ENCODE measurements at regions of chr1 and their contacts with region 1.

Region 1: GRCh38 chr1:91165033-91165654 is 143.3 kb upstream of the ZNF644 start:
- DNase-seq: peak; percentile 78
- H3K4me3 ChIP-seq: no peak overlapping the region
- H3K27ac ChIP-seq: no peak overlapping the region
- H3K4me1 ChIP-seq: no peaks in the 10 kb centered on the region
- H3K27me3 ChIP-seq: no peaks in the 10 kb centered on the region
- CTCF ChIP-seq: peak; percentile 60 to 87 (median 78)
- EP300 ChIP-seq: no peak
- POLR2A ChIP-seq: no peak

Region 2: GRCh38 chr1:90434460-90434859 is 730.7 kb before region 1 on chr1:
- intact Hi-C with region 1: no loop called
- DNase-seq: no peak
- H3K4me3 ChIP-seq: no peak overlapping the region
- H3K27ac ChIP-seq: no peak overlapping the region
- H3K4me1 ChIP-seq: no peaks in the 10 kb centered on the region
- H3K27me3 ChIP-seq: no peaks in the 10 kb centered on the region
- CTCF ChIP-seq: no peak
- EP300 ChIP-seq: no peak
- POLR2A ChIP-seq: no peak

Region 3: GRCh38 chr1:90579212-90579802 is 585.8 kb before region 1 on chr1:
- intact Hi-C with region 1: loop called (anchors 2 kb)
- DNase-seq: no peak
- H3K4me3 ChIP-seq: no peak overlapping the region
- H3K27ac ChIP-seq: no peak overlapping the region
- H3K4me1 ChIP-seq: no peaks in the 10 kb centered on the region
- H3K27me3 ChIP-seq: no peaks in the 10 kb centered on the region
- CTCF ChIP-seq: peak in 3 of 4 experiments; percentile 27 to 60 (median 27)
- EP300 ChIP-seq: no peak
- POLR2A ChIP-seq: no peak

Region 4: DNA sequence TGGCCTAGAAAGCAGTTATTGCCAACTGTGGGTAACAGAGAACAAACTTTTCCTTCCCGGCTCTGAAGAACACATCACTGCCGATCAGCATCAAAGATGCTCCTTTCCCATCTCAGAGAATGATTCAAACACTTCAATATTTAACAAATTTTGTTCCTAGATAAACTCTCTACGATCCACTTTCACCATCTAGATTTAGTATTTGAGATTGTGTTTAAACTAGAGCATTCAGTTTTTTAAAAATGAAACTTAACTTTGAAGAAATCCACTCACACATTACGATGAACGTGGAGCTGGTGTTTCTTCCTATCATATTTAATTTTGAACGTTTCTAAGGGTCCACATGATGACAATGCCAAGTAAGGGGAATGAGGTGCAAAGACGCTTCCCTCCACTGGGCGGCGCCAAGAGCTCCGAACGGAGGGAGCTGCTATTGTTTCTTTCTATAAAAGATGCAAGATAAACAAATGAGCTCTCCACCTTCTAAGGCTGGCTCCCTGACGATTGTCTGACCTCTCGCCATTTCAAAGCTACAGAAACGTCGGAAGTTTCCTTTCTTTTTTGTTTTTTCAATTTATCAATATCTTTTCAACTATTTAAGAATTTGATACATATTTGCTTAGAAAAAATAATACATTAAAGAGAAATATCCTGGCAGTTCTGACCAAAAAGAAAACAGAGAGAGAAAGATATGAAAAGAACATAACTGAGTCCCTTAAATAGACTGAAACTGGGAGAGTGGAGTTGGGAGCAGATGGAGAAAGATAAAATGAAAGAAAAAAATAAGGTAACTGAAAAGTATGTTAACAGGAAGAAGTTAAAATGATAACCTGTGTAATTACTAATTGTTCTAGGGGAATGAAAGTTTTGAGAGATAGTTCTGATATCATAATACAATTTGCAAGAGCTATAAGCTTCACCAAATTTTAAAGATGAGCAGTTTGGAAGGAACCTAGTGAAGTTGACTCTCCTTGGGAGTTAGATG is 443.6 kb before region 1 on chr1:
- intact Hi-C with region 1: loop called (anchors 10 kb)
- DNase-seq: no peak
- H3K4me3 ChIP-seq: no peak overlapping the region
- H3K27ac ChIP-seq: no peak overlapping the region
- H3K4me1 ChIP-seq: peaks cover 0 to 65% (median 57%) of the 10 kb centered on the region in 4 donors
- H3K27me3 ChIP-seq: peaks cover 82 to 100% (median 99%) of the 10 kb centered on the region in 3 donors
- CTCF ChIP-seq: peak in 3 of 4 experiments; percentile 25 to 52 (median 26)
- EP300 ChIP-seq: no peak
- POLR2A ChIP-seq: no peak

Region 5: DNA sequence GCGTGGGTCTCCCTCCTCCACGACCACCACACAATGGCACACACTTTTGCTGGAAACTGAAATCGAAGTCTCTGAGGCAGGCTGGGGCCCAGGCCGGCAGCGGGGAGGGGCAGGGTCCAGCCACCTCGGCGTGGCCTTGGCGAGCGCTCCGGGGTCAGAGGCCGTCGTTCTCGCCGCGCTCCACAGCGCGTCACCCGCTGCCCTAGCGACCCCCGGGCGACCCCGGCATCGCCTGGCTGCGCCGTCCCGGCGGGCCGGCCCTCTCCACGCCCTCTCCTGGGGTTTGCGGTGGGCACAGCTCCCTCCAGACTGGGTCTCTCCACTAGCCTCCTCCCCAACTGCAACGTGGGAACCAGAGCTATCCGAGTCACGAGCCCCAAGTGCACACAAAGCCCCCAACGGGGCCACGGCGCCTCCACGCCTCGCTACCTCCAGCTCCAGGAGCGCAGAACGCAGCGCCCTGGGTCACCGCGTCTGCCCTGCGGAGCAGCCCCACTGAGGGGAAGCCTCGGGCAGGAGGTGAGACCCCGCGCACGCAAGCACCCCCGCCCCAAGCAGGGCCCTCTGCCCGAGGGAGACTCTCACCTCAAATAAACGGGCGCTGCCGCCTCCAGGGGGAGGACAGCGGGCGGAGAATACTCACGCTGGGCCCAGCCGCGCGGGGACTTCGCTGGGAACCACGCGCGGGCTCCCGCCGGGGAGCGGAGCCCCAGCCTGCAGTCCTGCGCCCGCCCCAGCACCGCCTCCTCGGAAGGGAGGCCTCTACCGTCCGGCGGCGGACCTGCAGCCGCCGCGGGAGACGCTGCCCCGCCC is 314.0 kb before region 1 on chr1:
- intact Hi-C with region 1: loop called (anchors 10 kb)
- DNase-seq: peak; percentile 88
- H3K4me3 ChIP-seq: peak overlapping the region; percentile 61 to 75 (median 62)
- H3K27ac ChIP-seq: peak overlapping the region; percentile 43 to 62 (median 50)
- H3K4me1 ChIP-seq: peaks cover 0 to 18% (median 10%) of the 10 kb centered on the region in 4 donors
- H3K27me3 ChIP-seq: no peaks in the 10 kb centered on the region
- CTCF ChIP-seq: peak; percentile 7 to 91 (median 26)
- EP300 ChIP-seq: no peak
- POLR2A ChIP-seq: no peak

Region 6: DNA sequence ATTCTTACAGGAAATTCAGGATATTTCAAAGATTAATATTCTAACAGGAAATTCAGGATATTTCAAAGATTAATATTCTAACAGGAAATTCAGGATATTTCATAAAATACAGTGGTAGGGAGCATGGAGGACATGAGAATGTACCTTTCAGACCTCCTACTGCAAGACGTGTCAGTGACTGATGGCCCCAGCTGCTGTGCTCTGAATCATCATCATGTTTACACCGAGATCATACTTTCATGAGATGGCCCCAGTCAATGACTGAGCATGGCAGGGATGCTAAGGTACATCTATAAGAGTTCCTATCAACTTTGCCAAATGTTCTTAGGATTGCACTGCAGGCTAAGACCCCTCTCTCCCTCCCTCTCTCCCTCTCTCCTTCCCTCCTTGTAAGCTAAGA is 170.5 kb after region 1 on chr1:
- intact Hi-C with region 1: no loop called
- DNase-seq: no peak
- H3K4me3 ChIP-seq: no peak overlapping the region
- H3K27ac ChIP-seq: no peak overlapping the region
- H3K4me1 ChIP-seq: no peaks in the 10 kb centered on the region
- H3K27me3 ChIP-seq: no peaks in the 10 kb centered on the region
- CTCF ChIP-seq: no peak
- EP300 ChIP-seq: no peak
- POLR2A ChIP-seq: no peak